MCF 10A (cell line): ENCODE measurements at regions of chr9 and their contacts with region 1.

Region 1: DNA sequence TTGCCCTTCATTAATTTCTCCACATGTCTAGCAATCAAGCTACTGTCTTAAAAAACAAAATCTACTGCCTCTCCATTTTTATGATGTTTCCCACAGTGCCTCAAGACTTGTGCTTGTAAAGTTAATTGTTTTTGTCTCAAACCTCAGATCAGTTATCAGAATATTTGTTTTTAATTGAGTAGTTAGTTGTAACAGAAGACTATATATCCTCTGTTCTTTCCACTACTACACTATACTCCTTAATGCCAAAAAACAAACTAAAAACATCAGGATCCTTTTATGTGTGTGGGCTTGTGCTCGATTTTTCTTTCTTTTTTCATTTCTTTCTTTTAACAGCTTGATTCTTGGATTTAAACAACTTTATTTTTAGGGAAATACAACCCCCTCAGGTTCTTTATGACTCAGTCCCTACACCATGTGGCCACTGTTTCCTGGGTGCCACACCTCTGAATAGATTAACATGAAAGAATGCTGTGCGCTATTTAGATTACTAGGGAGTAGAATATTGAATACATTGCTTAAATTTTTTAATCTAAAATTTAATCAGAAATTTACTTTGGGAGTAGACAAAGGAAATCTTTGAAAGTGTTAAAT is 1.2 kb downstream of the ASPN start:
- DNase-seq: peak; percentile 59
- H3K4me3 Mint-ChIP-seq: peak overlapping the region; percentile 30
- H3K27ac Mint-ChIP-seq: peak overlapping the region; percentile 97
- H3K4me1 Mint-ChIP-seq: peaks cover 22% of the 10 kb centered on the region
- H3K27me3 Mint-ChIP-seq: no peaks in the 10 kb centered on the region
- CTCF ChIP-seq: no peak

Region 2: DNA sequence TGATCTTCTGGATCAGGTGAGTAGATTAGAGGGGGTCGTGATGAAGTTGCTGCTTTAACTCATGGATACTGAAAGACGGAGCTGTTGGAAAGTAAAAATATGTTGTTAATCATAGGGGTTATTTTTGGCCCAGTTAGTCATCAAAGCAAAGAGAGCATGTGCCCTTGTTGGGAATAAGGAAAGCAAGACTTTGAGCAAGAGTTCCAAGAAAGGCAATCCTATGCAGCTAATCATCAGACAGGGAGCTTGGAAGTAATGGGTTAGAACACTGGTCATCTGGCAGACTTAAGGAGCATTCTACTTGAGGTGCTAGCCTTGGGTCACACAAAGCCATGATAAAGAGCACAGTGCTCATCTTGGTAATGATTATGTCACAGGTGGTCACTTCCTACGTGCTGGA is 17.2 kb before region 1 on chr9:
- CTCF ChIA-PET with region 1: interaction called, 3 read pairs
- POLR2A ChIA-PET with region 1: interaction called, 23 read pairs
- intact Hi-C with region 1: no loop called
- DNase-seq: peak; percentile 63
- H3K4me3 Mint-ChIP-seq: no peak overlapping the region
- H3K27ac Mint-ChIP-seq: peak overlapping the region; percentile 82
- H3K4me1 Mint-ChIP-seq: peaks cover 18% of the 10 kb centered on the region
- H3K27me3 Mint-ChIP-seq: no peaks in the 10 kb centered on the region
- CTCF ChIP-seq: no peak

Region 3: GRCh38 chr9:92496396-92497176 is 15.4 kb after region 1 on chr9:
- CTCF ChIA-PET with region 1: interaction called, 6 read pairs
- POLR2A ChIA-PET with region 1: interaction called, 26 read pairs
- intact Hi-C with region 1: no loop called
- DNase-seq: no peak
- H3K4me3 Mint-ChIP-seq: no peak overlapping the region
- H3K27ac Mint-ChIP-seq: no peak overlapping the region
- H3K4me1 Mint-ChIP-seq: peaks cover 7% of the 10 kb centered on the region
- H3K27me3 Mint-ChIP-seq: no peaks in the 10 kb centered on the region
- CTCF ChIP-seq: no peak

Region 4: GRCh38 chr9:92726971-92727678 is 246.0 kb after region 1 on chr9:
- CTCF ChIA-PET with region 1: no interaction called
- POLR2A ChIA-PET with region 1: no interaction called
- intact Hi-C with region 1: no loop called
- DNase-seq: no peak
- H3K4me3 Mint-ChIP-seq: no peak overlapping the region
- H3K27ac Mint-ChIP-seq: no peak overlapping the region
- H3K4me1 Mint-ChIP-seq: peaks cover 24% of the 10 kb centered on the region
- H3K27me3 Mint-ChIP-seq: no peaks in the 10 kb centered on the region
- CTCF ChIP-seq: no peak